Dorsolateral prefrontal cortex (tissue), 120 donors: ENCODE measurements at regions of chr16 and their contacts with region 1.

Region 1: GRCh38 chr16:46662123-46662522 is 26.9 kb downstream of the VPS35 start:
- DNase-seq: no peak
- H3K4me3 ChIP-seq: no peak overlapping the region
- H3K27ac ChIP-seq: no peak overlapping the region
- H3K27me3 ChIP-seq: no peaks in the 10 kb centered on the region
- CTCF ChIP-seq: no peak

Region 2: GRCh38 chr16:46632778-46633733 is 29.1 kb before region 1 on chr16:
- intact Hi-C with region 1: no loop called
- DNase-seq: no peak
- H3K4me3 ChIP-seq: no peak overlapping the region
- H3K27ac ChIP-seq: no peak overlapping the region
- H3K27me3 ChIP-seq: no peaks in the 10 kb centered on the region
- CTCF ChIP-seq: no peak

Region 3: GRCh38 chr16:46736695-46737094 is 74.6 kb after region 1 on chr16:
- intact Hi-C with region 1: loop called in 1 of 2 experiments (anchors 10 kb)
- DNase-seq: no peak
- H3K4me3 ChIP-seq: no peak overlapping the region
- H3K27ac ChIP-seq: no peak overlapping the region
- H3K27me3 ChIP-seq: no peaks in the 10 kb centered on the region
- CTCF ChIP-seq: no peak